Heart left ventricle (tissue), 16 donors: ENCODE measurements at regions of chr7 and their contacts with region 1.

Region 1: DNA sequence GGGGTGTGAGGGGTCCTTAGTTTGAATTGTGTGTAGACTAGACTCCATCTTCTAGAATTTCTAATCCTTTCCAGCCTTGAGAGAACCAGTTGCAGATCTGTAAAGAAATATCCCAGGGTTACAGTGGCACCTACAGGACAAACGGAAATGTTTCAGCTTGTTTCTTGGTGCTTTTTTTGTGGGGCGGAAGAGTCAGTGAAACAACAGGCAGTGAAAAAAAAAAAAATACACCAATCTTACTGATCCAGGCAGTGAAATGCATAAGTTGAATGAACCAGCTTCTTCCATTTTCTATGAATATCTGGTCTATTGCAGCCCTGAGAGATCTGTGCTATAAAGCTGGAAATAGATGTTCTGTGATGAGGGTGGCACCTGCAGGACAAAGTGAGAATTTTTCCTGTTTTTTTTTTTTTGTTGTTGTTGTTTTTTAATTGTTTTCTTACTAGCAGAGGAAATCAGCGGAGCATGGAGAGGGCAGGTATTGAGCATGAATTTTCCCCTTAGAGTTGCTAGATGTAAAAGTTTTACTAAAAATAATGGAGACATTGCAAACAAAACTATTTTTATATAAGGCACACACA is 81.9 kb upstream of the DYNC1I1 start:
- DNase-seq: peak in 2 of 5 donors; percentile 11 to 18
- ATAC-seq: peak; percentile 26 to 64 (median 56)
- H3K4me3 ChIP-seq: peak overlapping the region in 2 of 12 donors; percentile 11 to 42
- H3K27ac ChIP-seq: no peak overlapping the region
- H3K4me1 ChIP-seq: peaks cover 0 to 7% (median 0%) of the 10 kb centered on the region in 12 donors
- H3K27me3 ChIP-seq: no peaks in the 10 kb centered on the region
- CTCF ChIP-seq: peak; percentile 39 to 76 (median 64)
- POLR2A ChIP-seq: no peak

Region 2: DNA sequence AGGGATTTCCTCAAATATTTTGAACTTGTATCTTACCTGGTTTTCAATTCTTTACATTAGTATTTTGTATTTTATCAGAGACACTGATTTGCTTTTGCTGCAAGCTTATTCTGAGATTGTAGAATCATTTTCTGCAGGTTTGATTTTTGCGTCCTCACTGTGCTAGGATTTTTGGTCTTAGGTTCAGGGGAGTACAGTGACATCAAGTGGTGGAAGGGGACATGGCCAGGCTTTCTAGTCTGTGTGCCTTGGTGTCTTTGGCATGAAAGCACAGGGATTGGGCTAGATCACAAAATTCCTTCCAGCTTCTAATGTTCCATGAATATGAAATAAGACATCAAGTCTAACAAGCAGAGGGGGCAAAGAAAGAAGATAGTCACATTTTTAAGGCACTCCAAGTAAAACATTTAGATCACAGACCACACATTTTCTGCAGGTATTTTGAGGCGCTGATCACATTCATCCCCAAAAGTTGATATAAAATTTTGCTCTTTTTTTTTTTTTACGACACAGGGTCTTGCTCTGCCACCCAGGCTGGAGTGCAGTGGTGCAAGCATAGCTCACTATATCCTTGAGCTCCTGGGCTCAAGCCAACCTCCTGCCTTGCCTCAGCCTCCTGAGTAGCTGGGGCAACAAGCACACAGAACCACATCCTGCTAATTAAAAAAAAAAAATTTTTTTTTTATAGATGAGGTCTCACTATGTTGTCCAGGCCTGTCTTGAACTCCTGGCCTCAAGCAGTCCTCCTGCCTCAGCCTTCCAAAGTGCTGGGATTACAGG is 490.5 kb before region 1 on chr7:
- intact Hi-C with region 1: loop called in 1 of 10 experiments (anchors 10 kb)
- DNase-seq: peak in 2 of 5 donors; percentile 22 to 28
- ATAC-seq: peak; percentile 75 to 87 (median 82)
- H3K4me3 ChIP-seq: no peak overlapping the region
- H3K27ac ChIP-seq: no peak overlapping the region
- H3K4me1 ChIP-seq: peaks cover 0 to 7% (median 0%) of the 10 kb centered on the region in 12 donors
- H3K27me3 ChIP-seq: no peaks in the 10 kb centered on the region
- CTCF ChIP-seq: peak; percentile 42 to 74 (median 63)
- POLR2A ChIP-seq: no peak

Region 3: GRCh38 chr7:95376632-95377315 is 313.7 kb before region 1 on chr7:
- intact Hi-C with region 1: no loop called
- DNase-seq: no peak
- ATAC-seq: no peak
- H3K4me3 ChIP-seq: no peak overlapping the region
- H3K27ac ChIP-seq: no peak overlapping the region
- H3K4me1 ChIP-seq: no peaks in the 10 kb centered on the region
- H3K27me3 ChIP-seq: no peaks in the 10 kb centered on the region
- CTCF ChIP-seq: no peak
- POLR2A ChIP-seq: no peak

Region 4: GRCh38 chr7:95511716-95512260 is 178.7 kb before region 1 on chr7:
- intact Hi-C with region 1: loop called in 9 of 10 experiments (anchors 1 to 5 kb)
- DNase-seq: peak in 4 of 5 donors; percentile 50 to 59 (median 55)
- ATAC-seq: peak; percentile 75 to 93 (median 84)
- H3K4me3 ChIP-seq: peak overlapping the region in 2 of 12 donors; percentile 12 to 20
- H3K27ac ChIP-seq: no peak overlapping the region
- H3K4me1 ChIP-seq: peaks cover 0 to 3% (median 0%) of the 10 kb centered on the region in 12 donors
- H3K27me3 ChIP-seq: peaks cover 0 to 6% (median 0%) of the 10 kb centered on the region in 9 donors
- CTCF ChIP-seq: peak; percentile 85 to 95 (median 92)
- POLR2A ChIP-seq: no peak

Region 5: DNA sequence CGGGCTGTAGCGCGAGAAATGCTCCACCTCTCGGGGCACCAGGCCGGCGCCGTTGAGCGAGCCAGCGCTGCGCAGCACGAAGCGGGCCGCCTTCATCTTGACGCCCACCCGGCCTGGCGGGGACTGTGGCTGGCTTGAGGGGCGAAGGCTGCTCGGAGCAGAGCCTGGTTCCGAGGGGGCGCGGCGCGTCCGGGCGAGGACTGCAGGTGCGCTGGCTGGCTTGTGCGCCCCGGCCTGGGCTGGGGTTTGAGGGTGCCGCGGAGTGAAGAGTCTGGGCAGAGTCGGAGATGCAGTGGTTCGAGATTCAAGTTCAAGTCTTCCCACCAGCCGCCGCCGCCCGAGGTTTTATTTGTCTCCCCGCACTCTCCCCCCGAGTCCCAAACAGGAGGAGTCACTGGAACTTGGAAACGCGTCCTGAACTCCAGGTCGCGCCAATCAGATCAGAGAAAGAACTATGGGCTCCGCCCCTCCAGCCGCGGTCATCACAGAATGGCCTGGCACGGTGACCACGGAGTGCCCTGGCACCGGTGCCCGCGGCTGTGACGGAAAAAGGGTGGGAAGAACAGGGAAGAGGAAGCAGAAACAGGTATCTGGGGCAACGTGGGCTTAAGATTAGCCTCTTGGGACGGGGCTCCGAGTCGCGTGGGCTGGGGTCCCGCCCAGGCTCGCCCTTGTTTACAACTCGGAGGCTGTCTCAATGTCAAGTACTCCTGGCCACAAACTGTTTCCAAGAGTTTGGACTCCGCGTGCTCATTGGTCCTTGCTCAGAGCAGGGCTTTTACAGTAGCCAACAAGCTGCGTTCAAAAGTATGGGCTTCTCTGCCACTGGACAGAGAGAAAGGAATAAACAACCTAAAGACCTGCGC is 94.0 kb before region 1 on chr7 and contains the start of gene PDK4:
- intact Hi-C with region 1: loop called in 3 of 10 experiments (anchors 2 to 5 kb)
- DNase-seq: peak; percentile 92 to 97 (median 95)
- ATAC-seq: peak; percentile 83 to 96 (median 90)
- H3K4me3 ChIP-seq: peak within 1 kb of the TSS; percentile 70 to 98 (median 84)
- H3K27ac ChIP-seq: peak within 1 kb of the TSS; percentile 87 to 99 (median 96)
- H3K4me1 ChIP-seq: peaks cover 5 to 62% (median 40%) of the 10 kb centered on the region in 12 donors
- H3K27me3 ChIP-seq: no peaks in the 10 kb centered on the region
- CTCF ChIP-seq: no peak
- POLR2A ChIP-seq: peak; percentile 72 to 100
- total RNA-seq, gene PDK4: 45.6 to 4,362 (median 173) TPM